ENCODE measurements at regions of chr2 and their contacts with region 1.

Region 1: DNA sequence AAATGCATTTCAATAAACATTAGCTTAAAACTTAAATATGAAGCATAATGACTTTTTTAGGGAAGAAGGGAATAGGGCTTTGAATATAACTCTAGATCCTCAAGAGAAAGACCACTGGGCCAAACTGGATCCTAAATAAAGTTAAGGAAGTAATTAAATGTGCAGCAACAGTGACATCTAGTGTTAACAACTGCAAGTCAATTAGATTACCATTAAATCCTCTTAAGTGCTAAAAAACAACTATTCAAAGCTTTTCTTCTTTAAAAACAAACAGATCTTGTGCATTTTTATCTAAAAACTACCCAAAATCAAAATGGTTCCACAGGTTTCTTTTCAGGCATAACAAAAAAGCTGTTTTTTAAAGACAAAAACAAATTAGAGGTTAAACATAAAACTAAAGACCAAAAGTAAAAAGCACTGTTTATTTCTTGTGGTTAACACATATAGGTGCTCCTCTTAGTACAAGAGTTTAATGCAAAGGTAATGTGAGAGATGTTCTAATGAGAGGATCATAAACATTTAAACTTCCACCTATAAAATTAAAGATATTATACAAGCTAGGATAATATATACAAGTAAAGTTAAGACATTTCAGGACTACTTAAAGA is 111.4 kb downstream of the THADA start:
- DNase-seq: peak in 2 of 42 donors; percentile 13 to 18

Region 2: GRCh38 chr2:42835577-42836371 is 648.7 kb before region 1 on chr2:
- intact Hi-C with region 1: loop called (anchors 10 kb)
- DNase-seq: peak in 4 of 42 donors; percentile 1 to 42 (median 12)

Region 3: GRCh38 chr2:42944779-42945415 is 539.5 kb before region 1 on chr2:
- intact Hi-C with region 1: loop called (anchors 5 kb)
- DNase-seq: no peak

Region 4: DNA sequence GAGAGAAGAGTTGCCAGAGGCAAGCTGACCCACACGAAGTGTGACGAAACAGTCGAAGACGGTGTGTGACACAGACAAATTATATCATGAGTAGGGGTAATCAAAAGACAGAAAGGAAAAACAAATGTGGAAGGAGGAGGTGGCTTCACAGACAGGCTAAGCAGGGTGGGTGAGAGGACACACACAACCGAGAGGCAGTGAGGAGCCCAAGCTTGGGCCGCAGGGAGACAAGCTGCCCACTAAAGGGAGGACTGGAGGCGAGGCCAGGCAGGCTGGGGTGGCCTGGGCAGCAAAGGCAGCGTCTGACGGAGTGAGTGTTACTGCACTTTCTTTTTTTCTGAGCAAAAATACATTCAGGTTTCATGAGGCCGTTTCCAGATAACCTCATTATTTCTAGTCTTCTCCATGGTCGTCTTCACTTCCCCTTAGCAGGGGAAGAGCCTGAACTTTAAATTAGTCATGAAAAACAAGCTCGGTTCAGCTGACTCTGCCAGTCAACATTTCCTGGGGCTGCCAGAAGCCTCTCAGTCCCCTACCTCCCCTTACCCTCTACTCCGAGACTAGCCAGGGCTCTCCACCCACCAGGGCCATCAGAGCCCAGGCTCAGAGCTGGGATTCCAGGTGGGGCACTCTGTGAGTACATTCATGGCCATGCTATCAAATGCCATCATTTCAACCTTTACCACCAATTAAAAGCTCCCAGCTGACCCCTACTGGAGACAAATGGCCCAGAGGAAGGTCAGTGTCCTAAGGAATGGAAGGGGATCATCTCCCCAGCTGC is 244.3 kb before region 1 on chr2:
- intact Hi-C with region 1: loop called (anchors 5 kb)
- DNase-seq: no peak